Psoas muscle (tissue), 8 donors: ENCODE measurements at regions of chr17 and their contacts with region 1.

Region 1: DNA sequence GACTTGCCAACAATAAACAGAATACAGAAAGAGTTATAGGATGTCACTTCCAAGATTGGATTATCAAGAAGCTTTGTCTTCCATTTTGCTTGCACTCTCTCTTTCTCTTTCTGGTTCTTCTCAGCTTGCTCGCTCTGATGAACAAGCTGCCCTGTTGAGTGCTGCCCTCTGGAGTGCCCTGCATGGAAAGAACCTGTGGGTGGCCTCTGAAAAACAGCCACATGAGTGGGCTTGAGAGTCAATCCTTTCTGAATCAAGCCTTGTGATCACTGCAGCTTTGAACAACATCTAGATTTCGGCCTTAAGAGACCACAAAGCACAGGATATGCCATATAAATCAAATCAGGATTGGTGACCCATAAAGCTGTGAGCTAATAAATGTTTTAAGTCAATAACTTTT is 185.1 kb downstream of the KIF2B start:
- DNase-seq: no peak
- ATAC-seq: no peak
- H3K4me3 ChIP-seq: no peak overlapping the region
- H3K27ac ChIP-seq: no peak overlapping the region
- H3K4me1 ChIP-seq: peaks cover 5% of the 10 kb centered on the region
- H3K27me3 ChIP-seq: no peaks in the 10 kb centered on the region
- CTCF ChIP-seq: no peak

Region 2: DNA sequence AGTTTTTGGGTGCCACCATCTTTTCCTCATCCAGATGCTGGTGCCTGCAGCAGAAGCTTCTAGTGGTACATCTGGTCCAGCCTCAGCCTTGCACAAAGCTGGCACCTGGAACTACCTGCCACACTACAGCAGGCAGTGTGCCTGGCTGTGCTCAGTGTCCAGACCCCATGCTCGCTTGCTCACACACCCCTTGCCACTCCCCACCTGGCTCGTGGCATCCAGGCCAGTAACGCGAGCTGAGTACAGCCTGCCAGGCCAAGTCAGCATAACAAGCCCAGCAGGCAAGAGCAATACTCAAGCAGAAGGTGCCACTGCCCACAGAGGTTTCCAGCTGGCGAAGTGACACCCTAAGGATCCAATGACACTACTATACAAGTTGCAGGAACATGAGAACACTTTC is 214.9 kb before region 1 on chr17:
- intact Hi-C with region 1: loop called in 1 of 2 experiments (anchors 10 kb)
- DNase-seq: peak; percentile 55 to 82
- ATAC-seq: peak; percentile 90 to 93 (median 92)
- H3K4me3 ChIP-seq: peak overlapping the region; percentile 12
- H3K27ac ChIP-seq: peak overlapping the region; percentile 86
- H3K4me1 ChIP-seq: peaks cover 27% of the 10 kb centered on the region
- H3K27me3 ChIP-seq: no peaks in the 10 kb centered on the region
- CTCF ChIP-seq: no peak

Region 3: GRCh38 chr17:54063639-54064038 is 55.8 kb after region 1 on chr17:
- intact Hi-C with region 1: loop called in 1 of 2 experiments (anchors 10 kb)
- DNase-seq: no peak
- ATAC-seq: no peak
- H3K4me3 ChIP-seq: no peak overlapping the region
- H3K27ac ChIP-seq: no peak overlapping the region
- H3K4me1 ChIP-seq: no peaks in the 10 kb centered on the region
- H3K27me3 ChIP-seq: no peaks in the 10 kb centered on the region
- CTCF ChIP-seq: no peak